Sciatic nerve (tissue), 2 donors: ENCODE measurements at regions of chr11 and their contacts with region 1.

Region 1: DNA sequence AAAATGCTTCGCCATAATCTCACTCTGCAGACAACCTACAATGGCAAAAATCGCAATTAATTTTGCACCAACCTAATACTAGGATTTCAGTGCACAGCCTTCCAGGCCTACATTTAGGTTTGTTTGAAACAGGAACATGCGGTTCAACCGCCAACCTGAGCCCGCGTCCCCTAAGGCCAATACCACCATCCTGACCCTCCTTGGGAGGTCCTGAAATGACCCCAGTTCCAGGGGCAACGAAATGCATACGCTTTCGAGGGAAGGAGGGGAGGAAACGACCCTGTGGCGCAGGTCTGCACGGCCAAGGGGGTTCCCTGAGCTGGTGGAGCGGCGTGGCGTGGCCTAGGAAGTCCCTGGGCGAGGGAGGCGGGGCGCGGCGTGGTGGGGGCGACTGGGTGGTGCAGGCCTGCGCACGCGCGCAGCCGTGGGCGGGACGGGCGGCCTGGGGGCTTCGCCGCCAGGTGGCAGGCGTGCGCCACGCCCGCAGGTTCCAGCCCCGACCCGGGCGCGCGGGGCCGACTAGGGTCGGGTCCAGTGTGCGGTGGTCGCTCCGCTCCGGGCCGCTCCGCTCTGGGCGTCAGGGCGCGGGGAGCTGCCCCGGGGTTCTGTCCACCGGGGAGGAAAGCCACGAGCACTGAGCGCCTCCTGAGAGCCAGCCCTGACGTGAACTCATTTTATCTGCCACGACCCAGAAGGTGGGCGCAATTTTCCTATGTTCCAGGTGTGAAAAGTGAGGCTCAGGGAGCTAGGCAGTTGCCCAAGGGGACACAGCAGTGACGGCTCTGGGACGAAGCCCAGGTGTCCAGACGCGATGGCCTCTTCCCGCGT is 94.1 kb downstream of the SWAP70 start:
- DNase-seq: peak; percentile 94
- ATAC-seq: peak; percentile 54

Region 2: DNA sequence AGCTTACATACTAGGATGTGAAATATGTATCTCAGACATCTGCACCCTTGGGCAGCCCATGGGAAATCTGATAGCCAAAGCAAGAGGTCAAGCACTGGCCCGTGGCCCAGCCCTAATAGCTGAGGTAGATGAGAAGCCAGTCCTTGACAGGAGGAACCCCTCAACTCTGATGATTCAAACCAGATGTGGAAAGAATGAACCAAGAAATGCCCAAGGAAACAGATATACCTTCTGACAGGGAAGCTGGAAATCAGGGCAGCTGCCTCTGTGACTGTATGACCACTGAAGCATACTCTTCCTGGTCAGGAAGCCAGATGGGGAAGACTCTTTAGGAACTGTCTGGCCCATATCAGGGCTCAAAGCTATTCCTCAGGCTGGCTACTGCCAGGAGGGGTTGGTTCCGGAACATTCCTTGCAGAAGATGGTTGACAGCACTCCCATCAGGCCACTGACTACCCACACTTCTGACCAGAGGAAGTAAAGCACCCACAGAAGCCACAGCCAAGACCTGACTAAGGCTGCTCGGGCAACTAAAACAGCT is 30.0 kb after region 1 on chr11:
- intact Hi-C with region 1: no loop called
- DNase-seq: no peak
- ATAC-seq: peak; percentile 58

Region 3: DNA sequence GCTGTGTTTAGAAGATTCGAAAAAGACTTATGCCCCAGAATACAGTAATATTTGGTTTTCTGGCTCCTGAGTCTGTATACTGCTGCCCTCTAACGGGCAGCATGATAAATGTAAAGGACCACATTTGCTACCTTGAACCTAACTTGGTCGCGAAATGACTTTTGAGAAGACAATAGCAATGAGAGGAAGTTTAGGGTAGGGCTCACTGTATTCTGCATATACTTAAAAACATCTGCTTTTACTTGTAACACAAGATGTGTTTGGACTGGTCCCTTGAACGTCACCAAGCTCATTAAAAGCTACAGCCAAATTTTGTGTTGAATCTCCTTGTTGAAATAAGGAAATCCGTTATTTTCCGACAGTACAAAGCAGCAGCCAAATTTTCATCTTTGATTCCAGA is 215.0 kb after region 1 on chr11:
- intact Hi-C with region 1: loop called (anchors 5 kb)
- DNase-seq: no peak
- ATAC-seq: peak; percentile 79

Region 4: GRCh38 chr11:10307442-10308207 is 549.6 kb after region 1 on chr11:
- intact Hi-C with region 1: loop called (anchors 5 kb)
- DNase-seq: peak; percentile 91
- ATAC-seq: peak; percentile 77